ENCODE measurements at regions of chr6 and their contacts with region 1.

Region 1: DNA sequence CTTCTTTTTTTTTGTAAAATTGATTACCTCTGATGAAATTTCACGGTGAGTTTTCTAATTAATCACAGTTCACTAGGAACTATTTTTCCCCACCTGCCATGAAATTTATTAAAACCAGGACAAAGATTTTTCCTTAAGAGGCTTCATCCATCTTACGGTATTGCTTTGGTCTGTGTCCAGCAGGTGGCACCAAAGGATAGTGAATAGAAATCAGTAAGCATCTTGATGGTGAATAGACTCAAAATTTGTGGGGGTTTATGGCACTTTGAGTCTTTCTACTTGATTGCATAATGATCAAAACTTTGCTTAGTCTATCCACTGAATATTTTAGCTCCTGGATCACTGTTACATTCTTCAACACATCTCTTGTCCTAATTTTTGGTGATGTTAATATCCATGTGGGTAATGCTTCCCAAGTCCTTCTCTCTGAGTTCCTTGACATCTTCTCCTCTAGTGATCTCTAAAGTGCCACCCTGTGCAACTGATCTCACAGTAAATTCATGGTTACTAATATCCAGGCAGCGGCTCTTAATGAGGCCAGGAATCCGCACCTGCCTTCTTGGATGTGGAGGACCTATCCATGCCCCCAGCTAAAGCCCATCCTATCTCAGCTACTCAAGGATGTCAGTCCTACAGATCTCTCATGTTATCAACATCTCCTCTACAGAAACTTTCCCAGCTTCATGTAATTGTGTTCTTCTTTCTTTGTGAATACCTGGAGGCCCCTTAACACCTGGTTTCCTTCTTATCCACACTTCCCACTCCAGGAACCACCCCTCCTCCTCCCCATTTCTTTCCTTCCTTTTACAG is 54.5 kb downstream of the STMND1 start:
- DNase-seq: no peak
- ATAC-seq: peak; percentile 31
- H3K4me3 Mint-ChIP-seq: no peak overlapping the region
- H3K27ac Mint-ChIP-seq: no peak overlapping the region
- H3K4me1 Mint-ChIP-seq: no peaks in the 10 kb centered on the region
- H3K27me3 Mint-ChIP-seq: peaks cover 11% of the 10 kb centered on the region
- CTCF ChIP-seq: peak; percentile 13

Region 2: GRCh38 chr6:17584241-17584803 is 428.0 kb after region 1 on chr6:
- CTCF ChIA-PET with region 1: interaction called, 5 read pairs
- POLR2A ChIA-PET with region 1: no interaction called
- intact Hi-C with region 1: loop called (anchors 1 kb)
- DNase-seq: no peak
- ATAC-seq: peak; percentile 52
- H3K4me3 Mint-ChIP-seq: no peak overlapping the region
- H3K27ac Mint-ChIP-seq: peak overlapping the region; percentile 19
- H3K4me1 Mint-ChIP-seq: peaks cover 3% of the 10 kb centered on the region
- H3K27me3 Mint-ChIP-seq: peaks cover 2% of the 10 kb centered on the region
- CTCF ChIP-seq: peak; percentile 83

Region 3: GRCh38 chr6:17803409-17803808 is 647.1 kb after region 1 on chr6:
- CTCF ChIA-PET with region 1: interaction called, 10 read pairs
- POLR2A ChIA-PET with region 1: no interaction called
- intact Hi-C with region 1: loop called (anchors 1 kb)
- DNase-seq: no peak
- ATAC-seq: no peak
- H3K4me3 Mint-ChIP-seq: no peak overlapping the region
- H3K27ac Mint-ChIP-seq: no peak overlapping the region
- H3K4me1 Mint-ChIP-seq: no peaks in the 10 kb centered on the region
- H3K27me3 Mint-ChIP-seq: no peaks in the 10 kb centered on the region
- CTCF ChIP-seq: no peak

Region 4: DNA sequence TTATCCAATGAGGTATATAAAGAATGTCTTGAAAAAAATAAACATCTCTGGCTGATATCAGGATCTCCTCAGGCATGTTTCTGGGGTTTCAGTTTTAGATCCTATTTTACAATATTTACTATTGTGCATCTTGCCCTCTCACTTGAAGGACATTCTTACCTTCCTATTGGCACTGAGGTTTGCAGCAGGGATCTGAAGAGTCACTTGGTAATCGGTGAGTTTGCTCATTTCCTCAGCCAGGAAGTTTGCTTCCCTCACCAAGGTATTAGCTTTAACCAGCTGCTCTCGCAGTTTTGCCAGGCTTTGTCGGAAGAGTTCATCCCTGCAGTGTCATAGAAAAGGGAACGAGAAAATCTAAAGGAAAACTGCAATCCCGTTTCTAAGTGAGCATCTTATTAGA is 652.3 kb after region 1 on chr6:
- CTCF ChIA-PET with region 1: interaction called, 10 read pairs
- POLR2A ChIA-PET with region 1: no interaction called
- intact Hi-C with region 1: loop called (anchors 1 kb)
- DNase-seq: no peak
- ATAC-seq: no peak
- H3K4me3 Mint-ChIP-seq: no peak overlapping the region
- H3K27ac Mint-ChIP-seq: no peak overlapping the region
- H3K4me1 Mint-ChIP-seq: no peaks in the 10 kb centered on the region
- H3K27me3 Mint-ChIP-seq: no peaks in the 10 kb centered on the region
- CTCF ChIP-seq: no peak

Region 5: GRCh38 chr6:17820055-17820454 is 663.7 kb after region 1 on chr6:
- CTCF ChIA-PET with region 1: interaction called, 6 read pairs
- POLR2A ChIA-PET with region 1: no interaction called
- intact Hi-C with region 1: loop called (anchors 1 kb)
- DNase-seq: no peak
- ATAC-seq: no peak
- H3K4me3 Mint-ChIP-seq: no peak overlapping the region
- H3K27ac Mint-ChIP-seq: no peak overlapping the region
- H3K4me1 Mint-ChIP-seq: no peaks in the 10 kb centered on the region
- H3K27me3 Mint-ChIP-seq: no peaks in the 10 kb centered on the region
- CTCF ChIP-seq: no peak

Region 6: DNA sequence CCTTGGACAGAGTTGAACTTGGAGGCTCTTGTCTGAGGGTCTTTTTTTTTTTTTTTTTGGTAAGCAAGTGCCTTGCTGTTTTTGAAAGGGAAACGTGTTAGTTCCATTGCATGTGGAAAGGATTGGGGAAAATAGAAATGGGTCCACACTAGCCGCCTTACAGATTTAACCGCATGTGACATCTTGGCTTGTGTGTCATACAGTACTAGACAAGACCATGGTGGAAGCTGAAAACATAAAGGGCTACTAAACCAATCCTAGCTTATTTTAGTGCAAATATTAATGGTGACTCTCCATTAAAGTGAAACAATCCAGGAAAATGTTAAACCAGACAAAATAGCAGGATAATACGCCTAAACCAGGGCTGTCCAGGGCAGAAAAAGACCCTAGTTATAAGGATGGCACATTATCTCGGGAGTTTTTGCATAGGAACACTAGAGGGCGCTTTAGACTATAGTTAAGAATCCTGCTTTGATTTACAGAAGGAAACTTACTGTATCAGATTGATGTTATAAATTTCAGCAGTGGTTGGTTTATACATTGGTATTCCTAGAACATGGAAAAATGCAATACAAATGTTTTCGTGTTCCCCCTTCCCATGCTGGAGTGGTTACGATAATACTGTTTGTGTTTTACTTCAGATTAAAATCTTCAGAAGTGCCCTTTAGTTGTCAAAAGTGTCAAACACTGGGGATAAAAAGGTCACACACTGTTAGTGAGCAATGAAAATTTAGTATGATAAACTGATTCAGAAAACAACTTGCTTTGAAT is 1167.8 kb after region 1 on chr6:
- CTCF ChIA-PET with region 1: no interaction called
- POLR2A ChIA-PET with region 1: no interaction called
- intact Hi-C with region 1: loop called (anchors 10 kb)
- DNase-seq: no peak
- ATAC-seq: peak; percentile 62
- H3K4me3 Mint-ChIP-seq: no peak overlapping the region
- H3K27ac Mint-ChIP-seq: no peak overlapping the region
- H3K4me1 Mint-ChIP-seq: peaks cover 34% of the 10 kb centered on the region
- H3K27me3 Mint-ChIP-seq: no peaks in the 10 kb centered on the region
- CTCF ChIP-seq: peak; percentile 44

Region 7: DNA sequence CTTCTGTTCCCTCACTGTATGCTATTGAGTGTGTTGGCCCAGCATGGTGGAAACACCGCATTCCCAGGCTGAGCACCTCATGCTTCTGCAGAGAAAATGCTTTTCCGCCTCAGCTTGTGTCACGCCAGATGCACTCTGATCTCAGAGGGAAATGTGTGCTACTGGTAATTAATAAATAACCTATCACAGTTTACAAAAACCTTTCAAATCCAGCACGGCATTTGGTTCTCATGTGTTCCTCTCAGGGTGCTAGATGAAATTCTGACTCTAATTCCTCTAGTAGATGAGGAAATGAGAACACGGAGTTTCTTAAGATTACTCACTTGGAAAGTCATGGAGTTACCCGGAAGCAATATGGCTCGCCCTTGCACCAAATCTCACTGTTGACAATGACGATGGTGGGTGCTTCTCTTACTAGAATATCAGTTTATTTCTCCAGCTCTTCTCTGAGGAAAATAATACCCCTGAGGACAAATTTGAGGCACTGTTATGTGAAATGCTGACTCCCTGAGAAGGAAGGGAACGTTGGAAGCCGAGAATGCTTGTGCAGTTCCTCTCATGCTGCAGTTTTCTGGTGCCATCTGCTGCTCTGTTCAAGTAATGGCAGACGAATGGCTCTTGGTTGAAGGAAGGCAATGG is 1347.4 kb after region 1 on chr6:
- CTCF ChIA-PET with region 1: no interaction called
- POLR2A ChIA-PET with region 1: no interaction called
- intact Hi-C with region 1: loop called (anchors 5 kb)
- DNase-seq: no peak
- ATAC-seq: peak; percentile 88
- H3K4me3 Mint-ChIP-seq: peak overlapping the region; percentile 73
- H3K27ac Mint-ChIP-seq: no peak overlapping the region
- H3K4me1 Mint-ChIP-seq: peaks cover 14% of the 10 kb centered on the region
- H3K27me3 Mint-ChIP-seq: no peaks in the 10 kb centered on the region
- CTCF ChIP-seq: peak; percentile 79